Panc1 (cell line): ENCODE measurements at regions of chr20 and their contacts with region 1.

Region 1: GRCh38 chr20:1674361-1674760 is 16.8 kb upstream of the SIRPG start:
- DNase-seq: no peak
- ATAC-seq: no peak
- H3K4me3 ChIP-seq: no peak overlapping the region
- H3K27ac ChIP-seq: no peak overlapping the region
- H3K4me1 ChIP-seq: no peaks in the 10 kb centered on the region
- H3K27me3 ChIP-seq: peaks cover 17% of the 10 kb centered on the region
- CTCF ChIP-seq: no peak

Region 2: GRCh38 chr20:1524004-1524403 is 150.4 kb before region 1 on chr20:
- CTCF ChIA-PET with region 1: no interaction called
- POLR2A ChIA-PET with region 1: interaction called, 13 read pairs
- in situ Hi-C with region 1: no loop called
- intact Hi-C with region 1: no loop called
- DNase-seq: no peak
- ATAC-seq: no peak
- H3K4me3 ChIP-seq: no peak overlapping the region
- H3K27ac ChIP-seq: no peak overlapping the region
- H3K4me1 ChIP-seq: no peaks in the 10 kb centered on the region
- H3K27me3 ChIP-seq: peaks cover 5% of the 10 kb centered on the region; the same call in 1 of the 2 replicates
- CTCF ChIP-seq: no peak